Dorsolateral prefrontal cortex (tissue), 120 donors: ENCODE measurements at regions of chr1 and their contacts with region 1.

Region 1: DNA sequence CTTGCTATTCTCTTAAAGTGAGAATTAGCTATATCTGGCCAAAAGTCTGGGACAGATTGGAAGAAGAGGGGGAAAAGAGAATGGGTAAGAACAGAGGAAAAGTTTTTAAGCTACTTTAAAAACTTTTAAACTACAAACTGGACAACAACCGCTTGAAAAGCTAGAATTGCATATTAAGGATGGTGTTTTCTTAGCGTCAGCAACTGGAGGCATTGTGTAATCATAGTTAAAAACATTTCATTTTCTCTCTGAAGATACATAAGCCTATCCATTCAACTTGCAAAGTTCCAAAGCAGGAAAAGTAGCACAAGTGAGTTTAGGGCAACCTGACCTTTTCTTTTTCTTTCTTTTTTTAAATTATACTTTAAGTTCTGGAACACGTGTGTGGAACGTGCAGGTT is 10.9 kb downstream of the PBX1 start:
- DNase-seq: no peak
- H3K4me3 ChIP-seq: no peak overlapping the region
- H3K27ac ChIP-seq: peak overlapping the region in 2 of 59 donors; percentile 9 to 16
- H3K27me3 ChIP-seq: no peaks in the 10 kb centered on the region
- CTCF ChIP-seq: no peak

Region 2: GRCh38 chr1:164707868-164708331 is 138.0 kb after region 1 on chr1:
- intact Hi-C with region 1: loop called in 1 of 2 experiments (anchors 5 kb)
- DNase-seq: no peak
- H3K4me3 ChIP-seq: peak overlapping the region in 1 of 59 donors; percentile 8
- H3K27ac ChIP-seq: peak overlapping the region in 46 of 59 donors; percentile 4 to 81 (median 63)
- H3K27me3 ChIP-seq: no peaks in the 10 kb centered on the region
- CTCF ChIP-seq: no peak

Region 3: GRCh38 chr1:164805399-164805798 is 235.5 kb after region 1 on chr1:
- intact Hi-C with region 1: no loop called
- DNase-seq: no peak
- H3K4me3 ChIP-seq: no peak overlapping the region
- H3K27ac ChIP-seq: peak overlapping the region in 10 of 59 donors; percentile 8 to 68 (median 22)
- H3K27me3 ChIP-seq: no peaks in the 10 kb centered on the region
- CTCF ChIP-seq: no peak